ENCODE measurements at regions of chr2 and their contacts with region 1.

Region 1: DNA sequence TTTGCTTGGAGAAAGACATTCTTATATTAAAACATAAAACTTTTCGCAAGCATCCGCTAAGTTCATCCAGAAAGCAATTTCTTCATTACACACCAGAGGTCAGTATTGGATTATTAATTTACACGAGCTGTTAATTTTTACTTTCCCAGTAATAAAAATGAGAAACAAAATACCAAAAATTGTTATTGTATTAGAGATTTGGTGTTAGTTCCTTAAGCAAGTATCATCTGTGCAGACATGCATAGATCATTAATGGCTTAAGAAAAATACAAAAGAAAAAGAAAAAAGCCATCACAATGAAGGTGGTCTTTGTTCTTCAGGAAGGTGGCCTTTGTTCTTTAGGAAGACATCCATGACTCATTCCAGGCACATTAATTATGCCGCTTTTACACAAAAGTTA is 53.6 kb upstream of the HNMT start:
- DNase-seq: no peak
- ATAC-seq: no peak
- H3K4me3 ChIP-seq: no peak overlapping the region
- H3K27ac ChIP-seq: no peak overlapping the region
- H3K4me1 ChIP-seq: no peaks in the 10 kb centered on the region
- H3K27me3 ChIP-seq: no peaks in the 10 kb centered on the region

Region 2: DNA sequence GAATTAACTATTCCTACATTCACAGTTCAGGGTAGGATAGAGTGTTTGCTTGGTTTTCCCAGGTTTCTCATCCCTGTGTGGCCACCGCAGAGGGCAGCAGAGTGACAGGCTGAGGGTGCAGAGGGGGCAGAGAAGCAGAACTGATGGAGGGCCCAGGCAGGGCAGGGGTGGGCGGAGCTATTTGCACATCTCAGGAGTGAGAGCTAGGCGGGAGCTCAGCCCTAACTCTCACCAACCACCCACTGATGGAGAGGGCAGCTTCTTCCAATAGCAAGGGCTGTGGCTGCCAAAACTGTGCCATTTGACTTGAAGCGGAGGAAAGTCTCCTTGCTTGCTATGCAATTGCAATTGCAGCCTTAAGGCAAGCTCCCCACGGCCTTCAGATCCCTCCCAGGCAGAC is 1913.3 kb before region 1 on chr2:
- intact Hi-C with region 1: no loop called
- DNase-seq: no peak
- ATAC-seq: no peak
- H3K4me3 ChIP-seq: no peak overlapping the region
- H3K27ac ChIP-seq: no peak overlapping the region
- H3K4me1 ChIP-seq: peaks cover 2% of the 10 kb centered on the region
- H3K27me3 ChIP-seq: no peaks in the 10 kb centered on the region

Region 3: DNA sequence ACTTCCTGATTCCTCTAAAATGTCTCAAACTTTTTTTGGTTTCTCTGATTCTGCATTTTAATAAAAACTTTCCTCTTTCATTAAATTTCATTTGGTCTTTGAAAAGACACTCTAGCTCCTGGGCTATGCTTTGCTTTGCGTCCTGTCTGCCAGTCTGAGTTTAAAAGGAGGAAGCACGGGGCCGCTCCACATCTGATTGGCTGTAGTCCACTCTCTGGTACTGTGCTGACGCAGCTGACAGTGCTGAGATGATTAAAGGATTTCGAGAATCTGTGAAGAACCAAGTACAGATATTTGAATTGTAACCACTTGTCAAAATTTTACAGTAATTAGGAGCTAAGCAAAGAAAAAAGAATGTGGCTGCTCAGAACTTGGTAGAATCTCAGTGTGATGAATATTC is 146.0 kb before region 1 on chr2:
- intact Hi-C with region 1: no loop called
- DNase-seq: no peak
- ATAC-seq: no peak
- H3K4me3 ChIP-seq: no peak overlapping the region
- H3K27ac ChIP-seq: no peak overlapping the region
- H3K4me1 ChIP-seq: no peaks in the 10 kb centered on the region
- H3K27me3 ChIP-seq: no peaks in the 10 kb centered on the region

Region 4: GRCh38 chr2:138201286-138201685 is 290.6 kb after region 1 on chr2:
- intact Hi-C with region 1: no loop called
- DNase-seq: no peak
- ATAC-seq: peak; percentile 63 to 75
- H3K4me3 ChIP-seq: no peak overlapping the region
- H3K27ac ChIP-seq: no peak overlapping the region
- H3K4me1 ChIP-seq: no peaks in the 10 kb centered on the region
- H3K27me3 ChIP-seq: no peaks in the 10 kb centered on the region

Region 5: DNA sequence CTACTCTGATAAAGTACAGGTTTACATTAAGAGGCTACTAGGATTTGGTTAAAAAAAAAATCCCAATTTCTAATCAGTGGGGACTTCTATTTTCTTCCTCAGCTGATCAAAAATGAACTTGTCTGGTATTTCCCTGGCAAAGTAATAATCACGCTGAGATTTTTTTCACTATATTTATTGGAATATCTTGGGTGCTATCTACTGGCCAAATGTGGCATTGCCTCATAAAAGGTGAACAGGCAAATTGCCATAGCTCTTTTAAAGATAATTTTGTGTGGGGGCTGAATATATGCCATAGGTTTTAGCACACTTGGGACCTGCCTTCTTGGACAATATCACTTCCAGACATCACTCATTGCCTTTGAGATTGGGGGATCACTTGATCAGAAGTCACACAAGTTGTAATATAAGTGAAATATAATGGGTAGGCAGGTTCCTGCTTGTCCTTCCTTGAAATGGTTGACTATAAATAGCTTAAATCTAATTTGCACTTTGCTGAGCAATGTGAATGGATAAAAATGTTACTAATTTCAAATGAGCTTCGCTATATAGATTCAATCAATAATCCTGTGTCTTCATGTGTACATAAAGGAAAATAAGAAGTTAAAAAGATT is 876.5 kb after region 1 on chr2:
- intact Hi-C with region 1: loop called in 3 of 4 experiments (anchors 5 to 10 kb)
- DNase-seq: no peak
- ATAC-seq: no peak
- H3K4me3 ChIP-seq: no peak overlapping the region
- H3K27ac ChIP-seq: no peak overlapping the region
- H3K4me1 ChIP-seq: no peaks in the 10 kb centered on the region
- H3K27me3 ChIP-seq: no peaks in the 10 kb centered on the region

Region 6: GRCh38 chr2:138827426-138828054 is 916.9 kb after region 1 on chr2:
- intact Hi-C with region 1: loop called (anchors 5 kb)
- DNase-seq: no peak
- ATAC-seq: peak; percentile 64 to 69
- H3K4me3 ChIP-seq: no peak overlapping the region
- H3K27ac ChIP-seq: no peak overlapping the region
- H3K4me1 ChIP-seq: no peaks in the 10 kb centered on the region
- H3K27me3 ChIP-seq: no peaks in the 10 kb centered on the region